Head of caudate nucleus (tissue), 42 donors: ENCODE measurements at regions of chr1 and their contacts with region 1.

Region 1: DNA sequence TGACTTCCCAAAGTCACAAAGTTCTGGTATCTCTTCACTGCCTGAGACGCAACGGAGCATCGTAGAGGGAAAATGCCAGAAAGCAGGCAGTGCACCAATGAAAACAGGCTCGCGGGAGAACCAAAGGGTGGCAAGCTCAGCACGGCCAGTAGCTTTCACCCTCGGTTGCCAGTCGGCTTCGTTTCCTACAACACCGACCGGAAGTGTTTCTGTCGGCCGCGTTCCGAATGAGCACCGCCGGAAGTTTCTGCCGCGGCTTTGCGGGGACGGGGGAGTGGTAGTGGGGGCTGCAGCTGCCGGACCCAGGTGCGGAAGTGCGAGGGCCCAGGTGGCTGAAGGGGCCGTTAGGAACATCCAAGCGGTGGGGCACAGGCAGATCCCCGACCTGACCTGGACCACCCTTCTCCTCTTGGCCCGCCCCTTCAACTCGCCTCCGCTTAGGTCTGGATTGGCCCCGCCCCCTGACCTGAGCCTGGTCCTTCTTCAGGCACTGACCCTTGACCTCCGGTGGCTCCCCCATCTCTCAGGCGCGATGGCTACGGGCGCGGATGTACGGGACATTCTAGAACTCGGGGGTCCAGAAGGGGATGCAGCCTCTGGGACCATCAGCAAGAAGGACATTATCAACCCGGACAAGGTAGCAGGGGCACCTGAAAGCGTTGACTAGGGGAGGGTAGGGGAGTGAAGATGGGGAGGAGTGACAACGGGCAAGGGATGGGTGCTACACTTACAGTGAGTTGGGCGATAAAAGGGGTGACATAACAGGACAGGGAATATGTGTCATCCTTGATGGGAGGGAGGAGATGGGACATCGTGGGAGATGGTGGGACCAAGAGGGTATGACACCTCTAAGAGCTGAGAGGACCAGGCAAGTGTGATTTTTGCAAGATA is at the start of gene DMAP1:
- DNase-seq: peak; percentile 83 to 97 (median 92)

Region 2: DNA sequence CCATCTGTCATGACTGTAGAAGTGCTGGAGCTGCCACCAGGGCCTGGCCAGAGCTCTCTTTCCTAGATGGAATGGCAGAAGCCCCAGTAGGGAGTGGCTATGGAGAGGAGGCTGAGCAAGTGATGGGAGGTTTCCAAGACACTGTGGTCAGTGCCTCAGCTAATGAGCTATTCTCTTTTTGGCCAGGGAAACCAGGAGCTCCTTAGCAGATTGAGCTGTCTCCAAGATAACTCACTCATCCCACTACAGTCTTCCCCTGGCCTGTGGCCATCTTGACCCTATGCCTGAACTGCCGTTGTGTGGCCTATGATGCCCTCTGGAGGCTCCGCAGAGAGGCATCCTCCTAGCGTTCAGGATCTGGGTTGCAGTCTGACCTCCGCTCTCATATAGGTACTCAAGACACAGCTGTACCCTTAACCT is 81.1 kb after region 1 on chr1:
- intact Hi-C with region 1: loop called (anchors 10 kb)
- DNase-seq: peak in 40 of 42 donors; percentile 8 to 85 (median 52)

Region 3: GRCh38 chr1:44354840-44355581 is 141.5 kb after region 1 on chr1 and contains the start of gene ERI3:
- intact Hi-C with region 1: loop called (anchors 5 kb)
- DNase-seq: peak; percentile 97 to 99 (median 98)

Region 4: GRCh38 chr1:44640200-44640853 is 426.9 kb after region 1 on chr1:
- intact Hi-C with region 1: loop called (anchors 5 kb)
- DNase-seq: peak in 22 of 42 donors; percentile 38 to 83 (median 59)